ENCODE measurements at regions of chr9 and their contacts with region 1.

Region 1: DNA sequence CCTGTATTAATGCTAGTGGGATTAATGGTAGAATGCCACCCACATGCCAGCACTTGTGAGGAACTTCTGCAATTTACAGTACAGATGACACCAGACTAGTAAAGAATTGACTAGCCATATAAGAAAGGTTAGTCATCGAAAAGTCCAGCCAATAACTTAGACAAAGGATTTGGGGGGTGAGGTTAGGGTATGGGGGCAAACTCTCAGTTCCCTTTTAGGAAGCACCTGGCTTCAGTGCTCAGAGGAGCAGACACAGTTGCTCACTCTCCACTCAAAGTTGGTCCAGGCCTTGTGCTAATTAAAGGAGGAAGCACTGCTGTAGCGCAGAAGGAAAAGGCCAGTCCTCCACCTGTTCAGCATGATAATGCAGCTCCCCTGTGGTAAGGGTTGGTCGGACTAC is 25.2 kb downstream of the TGFBR1 start:
- DNase-seq: no peak
- ATAC-seq: no peak
- H3K4me3 ChIP-seq: no peak overlapping the region
- H3K27ac ChIP-seq: no peak overlapping the region
- H3K4me1 ChIP-seq: peaks cover 0 to 28% of the 10 kb centered on the region in 2 donors
- H3K27me3 ChIP-seq: no peaks in the 10 kb centered on the region
- CTCF ChIP-seq: no peak

Region 2: DNA sequence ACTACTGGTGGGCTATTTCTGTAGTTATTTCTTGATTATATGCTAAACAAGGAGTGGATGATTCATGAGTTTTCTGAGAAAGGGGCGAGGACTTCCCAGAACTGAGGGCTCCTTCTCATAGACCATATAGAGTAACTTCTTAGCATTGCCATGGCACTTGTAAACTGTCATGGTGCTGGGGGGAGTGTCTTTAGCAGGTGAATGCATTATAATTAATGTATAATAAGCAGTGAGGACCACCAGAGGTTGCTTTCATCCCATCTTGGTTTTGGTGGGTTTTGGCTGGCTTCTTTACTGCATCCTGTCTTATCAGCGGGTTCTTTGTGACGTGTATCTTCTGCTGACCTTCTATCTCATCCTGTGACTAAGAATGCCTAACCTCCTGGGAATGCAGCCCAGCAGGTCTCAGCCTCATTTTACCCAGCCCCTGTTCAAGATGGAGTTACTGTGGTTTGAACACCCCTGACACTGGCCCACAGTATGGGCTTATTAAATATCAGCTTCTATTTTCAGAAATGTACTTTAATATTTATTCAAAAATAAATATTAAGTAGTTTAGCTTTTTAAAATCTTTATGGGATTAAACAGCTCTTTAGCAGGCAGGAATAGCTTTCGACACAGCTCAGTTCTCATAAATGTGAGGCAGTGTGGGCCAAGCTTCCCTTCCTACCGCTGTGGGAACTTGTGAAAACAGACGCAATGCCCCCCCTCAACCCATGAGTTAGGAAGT is 278.2 kb before region 1 on chr9:
- intact Hi-C with region 1: loop called in 1 of 2 experiments (anchors 10 kb)
- DNase-seq: no peak
- ATAC-seq: no peak
- H3K4me3 ChIP-seq: no peak overlapping the region
- H3K27ac ChIP-seq: no peak overlapping the region
- H3K4me1 ChIP-seq: peaks cover under 1 to 8% of the 10 kb centered on the region in 2 donors
- H3K27me3 ChIP-seq: no peaks in the 10 kb centered on the region
- CTCF ChIP-seq: no peak

Measured in left lung (tissue), 14 donors.